ENCODE measurements at regions of chr4 and their contacts with region 1.

Region 1: GRCh38 chr4:6873792-6874461 is 35.7 kb upstream of the TBC1D14 start:
- H3K4me3 ChIP-seq: no peak overlapping the region
- H3K27ac ChIP-seq: no peak overlapping the region
- H3K4me1 ChIP-seq: no peaks in the 10 kb centered on the region
- CTCF ChIP-seq: peak; percentile 37; the same call in 1 of the 2 replicates

Region 2: GRCh38 chr4:6658597-6659075 is 215.3 kb before region 1 on chr4:
- CTCF ChIA-PET with region 1: no interaction called
- POLR2A ChIA-PET with region 1: no interaction called
- H3K4me3 ChIP-seq: no peak overlapping the region
- H3K27ac ChIP-seq: no peak overlapping the region
- H3K4me1 ChIP-seq: no peaks in the 10 kb centered on the region
- CTCF ChIP-seq: no peak

Region 3: DNA sequence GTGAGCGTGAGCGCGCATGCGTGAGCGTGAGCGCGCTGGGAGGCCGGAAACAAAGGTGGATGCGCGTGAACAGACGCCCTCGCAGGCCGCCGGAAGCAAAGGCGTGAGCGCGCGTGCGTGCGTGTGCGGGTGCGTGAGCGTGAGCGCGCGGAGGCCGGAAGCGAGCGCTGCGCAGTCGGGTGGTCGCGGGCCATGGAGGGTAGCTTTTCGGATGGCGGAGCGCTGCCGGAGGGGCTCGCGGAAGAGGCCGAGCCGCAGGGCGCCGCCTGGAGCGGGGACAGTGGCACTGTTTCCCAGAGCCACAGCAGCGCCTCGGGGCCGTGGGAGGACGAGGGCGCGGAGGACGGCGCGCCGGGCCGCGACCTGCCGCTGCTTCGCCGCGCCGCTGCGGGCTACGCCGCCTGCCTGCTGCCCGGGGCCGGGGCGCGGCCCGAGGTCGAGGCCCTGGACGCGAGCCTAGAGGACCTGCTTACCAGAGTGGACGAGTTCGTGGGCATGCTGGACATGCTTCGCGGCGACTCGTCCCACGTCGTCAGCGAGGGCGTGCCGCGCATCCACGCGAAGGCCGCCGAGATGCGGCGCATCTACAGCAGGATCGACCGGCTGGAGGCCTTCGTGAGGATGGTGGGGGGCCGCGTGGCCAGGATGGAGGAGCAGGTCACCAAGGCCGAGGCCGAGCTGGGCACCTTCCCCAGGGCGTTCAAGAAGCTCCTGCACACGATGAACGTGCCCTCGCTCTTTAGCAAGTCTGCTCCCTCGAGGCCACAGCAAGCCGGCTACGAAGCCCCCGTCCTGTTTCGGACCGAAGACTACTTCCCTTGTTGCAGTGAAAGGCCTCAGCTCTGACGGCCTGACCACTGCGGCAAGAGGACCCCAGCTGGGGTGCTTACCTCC is 157.7 kb before region 1 on chr4 and contains the start of gene BLOC1S4:
- CTCF ChIA-PET with region 1: interaction called, 111 read pairs
- POLR2A ChIA-PET with region 1: interaction called, 3 read pairs
- H3K4me3 ChIP-seq: peak within 1 kb of the TSS; percentile 70
- H3K27ac ChIP-seq: peak within 1 kb of the TSS; percentile 83
- H3K4me1 ChIP-seq: no peaks in the 10 kb centered on the region
- CTCF ChIP-seq: no peak; the same call in 1 of the 2 replicates

Region 4: DNA sequence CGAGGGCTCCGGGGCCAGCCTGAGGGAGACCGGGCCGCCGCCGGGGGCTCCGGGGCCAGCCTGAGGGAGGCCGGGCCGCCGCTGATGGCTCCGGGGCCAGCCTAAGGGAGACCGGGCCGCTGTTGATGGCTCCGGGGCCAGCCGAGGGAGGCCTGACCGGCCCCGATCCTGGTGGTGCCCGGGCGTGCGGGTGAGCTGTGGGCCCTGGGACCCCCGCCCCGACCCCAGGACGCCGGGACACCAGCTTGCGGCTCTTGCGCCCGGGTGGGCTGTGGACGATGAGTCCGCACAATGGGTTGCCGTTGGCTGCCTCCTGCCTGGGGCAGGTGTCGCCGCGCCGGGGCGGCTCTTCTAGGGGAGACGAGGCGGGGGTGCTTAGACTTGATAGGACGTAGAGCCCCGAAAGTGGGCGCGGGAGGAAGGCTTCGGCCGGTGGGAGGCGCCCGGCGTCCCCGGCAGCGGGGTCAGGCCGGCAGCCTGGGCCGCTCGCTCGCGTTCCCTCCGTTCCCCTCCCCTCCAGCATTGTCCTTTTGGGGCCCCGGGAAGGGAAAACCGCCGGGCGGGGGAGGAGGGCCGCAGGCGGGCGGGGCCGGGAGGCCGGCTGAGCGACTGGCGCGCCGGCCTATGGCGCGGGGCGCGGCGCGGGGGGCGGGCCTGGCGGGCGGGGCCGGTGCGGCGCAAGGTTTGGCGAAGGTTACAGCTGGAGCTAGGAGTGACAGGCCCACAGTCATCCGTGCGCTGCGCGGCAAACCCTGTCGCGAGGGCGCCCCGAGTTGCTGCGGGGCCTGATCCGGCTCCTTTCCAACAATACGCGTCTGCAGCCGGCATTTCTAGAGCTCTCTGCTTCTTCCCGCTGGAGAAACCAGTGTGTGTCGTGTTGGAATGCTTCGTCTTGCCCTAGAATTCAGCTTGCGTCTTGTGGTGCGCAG is 90.6 kb before region 1 on chr4:
- CTCF ChIA-PET with region 1: interaction called, 14 read pairs
- POLR2A ChIA-PET with region 1: interaction called, 3 read pairs
- H3K4me3 ChIP-seq: peak overlapping the region; percentile 90
- H3K27ac ChIP-seq: peak overlapping the region; percentile 91
- H3K4me1 ChIP-seq: no peaks in the 10 kb centered on the region
- CTCF ChIP-seq: peak; percentile 67

Region 5: GRCh38 chr4:6855692-6856297 is 18.1 kb before region 1 on chr4:
- CTCF ChIA-PET with region 1: interaction called, 15 read pairs
- POLR2A ChIA-PET with region 1: no interaction called
- H3K4me3 ChIP-seq: no peak overlapping the region
- H3K27ac ChIP-seq: no peak overlapping the region
- H3K4me1 ChIP-seq: no peaks in the 10 kb centered on the region
- CTCF ChIP-seq: no peak

Region 6: DNA sequence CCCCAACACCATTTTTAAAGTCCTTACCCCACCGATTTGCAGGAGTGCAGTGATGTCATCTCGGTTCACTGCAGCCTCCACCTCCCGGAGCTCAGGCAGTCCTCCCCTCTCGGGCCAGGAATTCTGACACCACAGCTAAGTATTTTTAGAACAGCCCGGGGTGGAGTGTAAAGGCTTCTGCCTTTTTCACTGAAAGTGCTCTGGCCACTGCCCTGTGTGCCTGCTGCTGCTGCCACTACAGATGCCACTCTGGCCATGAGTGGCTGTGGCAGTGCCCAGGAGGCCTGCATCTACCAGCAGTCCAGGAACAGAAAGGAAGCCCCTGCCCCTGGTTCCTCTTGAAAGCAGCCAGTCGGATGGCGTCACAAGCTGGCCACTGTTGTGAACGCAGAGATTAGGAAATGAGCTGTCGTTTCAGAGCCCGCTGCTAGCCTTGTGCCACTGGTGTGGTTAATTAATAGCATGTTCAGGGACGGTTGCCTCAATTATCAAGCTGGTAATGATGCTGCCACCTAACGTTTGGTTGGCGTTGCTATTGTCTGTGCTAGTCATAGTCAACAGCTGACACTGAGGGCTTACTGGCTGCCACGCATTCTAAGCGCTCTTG is 12.1 kb after region 1 on chr4:
- CTCF ChIA-PET with region 1: interaction called, 32 read pairs
- POLR2A ChIA-PET with region 1: no interaction called
- H3K4me3 ChIP-seq: no peak overlapping the region
- H3K27ac ChIP-seq: no peak overlapping the region
- H3K4me1 ChIP-seq: no peaks in the 10 kb centered on the region
- CTCF ChIP-seq: no peak

Region 7: DNA sequence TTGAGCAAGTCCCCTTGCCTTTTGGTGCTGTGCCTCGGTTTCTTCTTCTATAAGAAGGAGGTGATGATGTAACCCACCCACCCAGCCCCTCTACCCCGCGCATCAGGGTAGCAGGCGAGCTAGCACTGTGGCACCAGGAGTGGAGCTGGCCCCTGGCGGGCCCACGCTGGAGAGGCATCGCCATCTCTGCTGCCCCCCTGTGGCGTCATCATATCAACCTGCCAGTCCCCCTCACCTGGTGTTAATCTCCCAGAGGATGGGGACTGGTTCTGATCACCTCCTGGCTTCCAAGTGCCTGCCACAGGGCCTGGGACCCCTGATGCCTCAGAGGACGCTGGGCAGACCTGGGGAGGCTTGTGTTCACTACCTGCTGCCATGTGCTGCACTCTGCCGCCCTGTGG is 312.1 kb after region 1 on chr4:
- CTCF ChIA-PET with region 1: no interaction called
- POLR2A ChIA-PET with region 1: no interaction called
- H3K4me3 ChIP-seq: no peak overlapping the region
- H3K27ac ChIP-seq: no peak overlapping the region
- H3K4me1 ChIP-seq: no peaks in the 10 kb centered on the region
- CTCF ChIP-seq: no peak

Measured in HEK293 (cell line).